ENCODE measurements at regions of chr21 and their contacts with region 1.

Region 1: DNA sequence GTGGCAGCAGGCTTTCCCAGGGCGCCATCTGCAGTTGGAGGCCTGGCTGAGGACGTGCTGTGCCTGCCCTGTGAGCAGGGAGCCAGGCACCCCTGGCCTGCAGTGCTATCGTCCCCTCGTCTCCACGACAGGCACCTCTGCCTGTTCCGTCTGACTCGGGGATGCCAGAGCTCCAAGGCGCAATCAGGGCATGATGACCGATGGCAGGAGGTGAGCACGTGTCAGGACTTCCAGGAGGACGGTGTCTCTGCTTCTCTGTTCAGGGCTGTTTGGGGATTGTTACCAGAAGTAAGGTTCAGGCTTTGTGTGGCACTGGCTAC is 125.2 kb downstream of the PCBP3 start:
- DNase-seq: peak in 1 of 9 donors; percentile 45
- ATAC-seq: no peak
- H3K4me3 ChIP-seq: no peak overlapping the region
- H3K4me3 Mint-ChIP-seq: peak overlapping the region in 7 of 10 donors; percentile 43 to 76 (median 56)
- H3K27ac ChIP-seq: no peak overlapping the region
- H3K27ac Mint-ChIP-seq: peak overlapping the region; percentile 53 to 97 (median 94)
- H3K4me1 ChIP-seq: peaks cover 0 to 29% of the 10 kb centered on the region in 2 donors
- H3K4me1 Mint-ChIP-seq: peaks cover 15 to 51% (median 38%) of the 10 kb centered on the region in 7 donors
- H3K27me3 ChIP-seq: no peaks in the 10 kb centered on the region
- H3K27me3 Mint-ChIP-seq: no peaks in the 10 kb centered on the region

Region 2: GRCh38 chr21:45554477-45555175 is 214.1 kb before region 1 on chr21:
- CTCF ChIA-PET with region 1: no interaction called
- POLR2A ChIA-PET with region 1: no interaction called
- intact Hi-C with region 1: loop called (anchors 5 kb)
- DNase-seq: peak; percentile 74 to 99 (median 91)
- ATAC-seq: peak; percentile 93
- H3K4me3 ChIP-seq: peak overlapping the region; percentile 89
- H3K4me3 Mint-ChIP-seq: peak overlapping the region; percentile 92 to 99 (median 96)
- H3K27ac ChIP-seq: peak overlapping the region; percentile 67
- H3K27ac Mint-ChIP-seq: peak overlapping the region; percentile 87 to 99 (median 96)
- H3K4me1 ChIP-seq: peaks cover 24 to 26% of the 10 kb centered on the region in 2 donors
- H3K4me1 Mint-ChIP-seq: peaks cover 22 to 39% (median 28%) of the 10 kb centered on the region in 7 donors
- H3K27me3 ChIP-seq: no peaks in the 10 kb centered on the region
- H3K27me3 Mint-ChIP-seq: no peaks in the 10 kb centered on the region

Region 3: DNA sequence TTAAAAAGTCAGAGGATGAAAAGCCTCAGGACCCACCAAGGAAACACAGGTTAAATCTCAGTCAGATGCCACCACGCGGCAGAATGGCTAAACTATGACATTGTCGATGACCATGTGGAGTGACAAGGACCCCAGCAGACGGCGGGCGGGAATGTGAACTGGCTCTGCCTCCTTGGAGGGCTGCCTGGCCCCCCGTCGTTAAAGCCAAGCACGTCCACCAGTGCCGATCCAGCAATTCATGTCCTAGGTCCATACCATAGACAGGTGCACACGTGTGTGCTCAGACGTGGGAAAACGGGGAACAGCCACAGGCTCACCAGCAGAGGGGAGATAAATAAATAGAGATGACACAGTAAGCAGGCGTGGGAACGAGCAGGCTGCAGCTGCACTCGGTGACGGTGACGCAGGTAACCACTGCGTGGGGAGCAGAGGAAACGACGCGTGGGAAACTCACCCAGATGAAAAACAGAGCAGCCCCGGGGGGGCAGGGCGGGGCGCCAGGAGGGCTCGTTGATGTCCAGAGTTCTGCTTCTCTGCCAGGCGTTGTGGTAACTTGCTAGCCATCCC is 153.5 kb before region 1 on chr21:
- CTCF ChIA-PET with region 1: no interaction called
- POLR2A ChIA-PET with region 1: no interaction called
- intact Hi-C with region 1: loop called in 1 of 2 experiments (anchors 2 kb)
- DNase-seq: peak; percentile 73 to 95 (median 93)
- ATAC-seq: peak; percentile 94
- H3K4me3 ChIP-seq: peak overlapping the region; percentile 45
- H3K4me3 Mint-ChIP-seq: peak overlapping the region; percentile 79 to 95 (median 87)
- H3K27ac ChIP-seq: peak overlapping the region; percentile 95
- H3K27ac Mint-ChIP-seq: peak overlapping the region; percentile 73 to 100 (median 98)
- H3K4me1 ChIP-seq: peaks cover 16 to 41% of the 10 kb centered on the region in 2 donors
- H3K4me1 Mint-ChIP-seq: peaks cover 17 to 58% (median 48%) of the 10 kb centered on the region in 7 donors
- H3K27me3 ChIP-seq: no peaks in the 10 kb centered on the region
- H3K27me3 Mint-ChIP-seq: peaks cover 0 to 34% (median 0%) of the 10 kb centered on the region in 5 donors

Region 4: GRCh38 chr21:45698493-45699184 is 70.1 kb before region 1 on chr21:
- CTCF ChIA-PET with region 1: no interaction called
- POLR2A ChIA-PET with region 1: no interaction called
- intact Hi-C with region 1: loop called in 1 of 2 experiments (anchors 5 kb)
- DNase-seq: no peak
- ATAC-seq: no peak
- H3K4me3 ChIP-seq: no peak overlapping the region
- H3K4me3 Mint-ChIP-seq: peak overlapping the region in 4 of 10 donors; percentile 40 to 69 (median 60)
- H3K27ac ChIP-seq: no peak overlapping the region
- H3K27ac Mint-ChIP-seq: peak overlapping the region in 7 of 9 donors; percentile 20 to 91 (median 70)
- H3K4me1 ChIP-seq: peaks cover 0 to 13% of the 10 kb centered on the region in 2 donors
- H3K4me1 Mint-ChIP-seq: peaks cover 5 to 42% (median 27%) of the 10 kb centered on the region in 7 donors
- H3K27me3 ChIP-seq: no peaks in the 10 kb centered on the region
- H3K27me3 Mint-ChIP-seq: no peaks in the 10 kb centered on the region

Region 5: DNA sequence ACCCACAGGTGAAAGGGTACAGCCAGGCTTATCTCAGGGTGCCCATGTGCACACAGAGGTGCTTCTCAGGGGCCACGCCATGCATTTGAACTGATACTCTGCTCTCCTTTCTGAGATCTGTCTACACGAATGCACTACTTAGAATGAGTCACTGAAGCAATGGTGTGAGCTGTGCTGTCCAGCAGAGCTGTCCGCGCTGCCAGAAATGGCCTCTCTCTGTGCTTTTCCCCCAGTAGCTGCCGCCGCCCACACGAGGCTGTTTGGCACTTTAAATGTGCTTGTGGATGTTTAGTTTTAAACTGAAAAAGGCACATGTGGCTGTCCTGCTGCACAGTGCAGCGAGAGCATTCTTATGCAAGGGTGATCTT is 125.7 kb after region 1 on chr21:
- CTCF ChIA-PET with region 1: no interaction called
- POLR2A ChIA-PET with region 1: no interaction called
- intact Hi-C with region 1: no loop called
- DNase-seq: no peak
- ATAC-seq: no peak
- H3K4me3 ChIP-seq: no peak overlapping the region
- H3K4me3 Mint-ChIP-seq: peak overlapping the region in 1 of 10 donors; percentile 31
- H3K27ac ChIP-seq: no peak overlapping the region
- H3K27ac Mint-ChIP-seq: peak overlapping the region in 3 of 9 donors; percentile 28 to 78 (median 66)
- H3K4me1 ChIP-seq: peaks cover 14 to 36% of the 10 kb centered on the region in 2 donors
- H3K4me1 Mint-ChIP-seq: peaks cover 16 to 46% (median 45%) of the 10 kb centered on the region in 7 donors
- H3K27me3 ChIP-seq: no peaks in the 10 kb centered on the region
- H3K27me3 Mint-ChIP-seq: peaks cover 0 to 17% (median 0%) of the 10 kb centered on the region in 5 donors